Uterus (tissue), 4 donors: ENCODE measurements at regions of chr12 and their contacts with region 1.

Region 1: DNA sequence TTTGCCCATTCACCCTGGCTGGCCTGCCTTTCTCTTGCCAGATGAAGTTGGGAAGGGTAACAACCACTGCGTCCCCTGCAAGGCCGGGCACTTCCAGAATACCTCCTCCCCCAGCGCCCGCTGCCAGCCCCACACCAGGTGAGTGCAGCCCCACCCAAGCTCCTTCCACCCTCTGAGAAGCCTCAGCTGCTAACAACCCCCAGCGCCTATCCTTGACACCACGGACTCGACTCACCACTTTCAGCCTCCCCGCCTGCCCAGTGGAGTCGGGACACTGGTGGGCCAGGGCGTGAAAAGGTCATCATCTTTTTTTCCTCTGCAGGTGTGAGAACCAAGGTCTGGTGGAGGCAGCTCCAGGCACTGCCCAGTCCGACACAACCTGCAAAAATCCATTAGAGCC is 2.1 kb downstream of the LTBR start:
- DNase-seq: no peak
- H3K4me3 ChIP-seq: no peak overlapping the region
- H3K27ac ChIP-seq: peak overlapping the region in 1 of 2 donors; percentile 33
- H3K4me1 ChIP-seq: peaks cover 0 to 7% of the 10 kb centered on the region in 2 donors
- H3K27me3 ChIP-seq: no peaks in the 10 kb centered on the region
- CTCF ChIP-seq: no peak
- POLR2A ChIP-seq: no peak

Region 2: GRCh38 chr12:6341417-6342139 is 44.4 kb before region 1 on chr12 and contains the start of gene TNFRSF1A:
- intact Hi-C with region 1: loop called (anchors 2 kb)
- DNase-seq: peak; percentile 76 to 89
- H3K4me3 ChIP-seq: peak within 1 kb of the TSS; percentile 60 to 86
- H3K27ac ChIP-seq: peak within 1 kb of the TSS; percentile 95 to 97
- H3K4me1 ChIP-seq: peaks cover 14 to 28% of the 10 kb centered on the region in 2 donors
- H3K27me3 ChIP-seq: no peaks in the 10 kb centered on the region
- CTCF ChIP-seq: peak in 1 of 4 experiments; percentile 16
- POLR2A ChIP-seq: peak; percentile 62 to 69
- total RNA-seq, gene TNFRSF1A: 71.8 to 297 (median 174) TPM